ENCODE measurements at regions of chr1 and their contacts with region 1.

Region 1: GRCh38 chr1:89454845-89455521 is 69.6 kb upstream of the LRRC8B start:
- DNase-seq: no peak
- H3K4me3 ChIP-seq: no peak overlapping the region
- H3K27me3 ChIP-seq: no peaks in the 10 kb centered on the region
- CTCF ChIP-seq: peak; percentile 63

Region 2: GRCh38 chr1:88998716-88999115 is 456.3 kb before region 1 on chr1:
- CTCF ChIA-PET with region 1: interaction called, 15 read pairs
- POLR2A ChIA-PET with region 1: no interaction called
- DNase-seq: no peak
- H3K4me3 ChIP-seq: no peak overlapping the region
- H3K27me3 ChIP-seq: no peaks in the 10 kb centered on the region
- CTCF ChIP-seq: peak; percentile 33

Region 3: DNA sequence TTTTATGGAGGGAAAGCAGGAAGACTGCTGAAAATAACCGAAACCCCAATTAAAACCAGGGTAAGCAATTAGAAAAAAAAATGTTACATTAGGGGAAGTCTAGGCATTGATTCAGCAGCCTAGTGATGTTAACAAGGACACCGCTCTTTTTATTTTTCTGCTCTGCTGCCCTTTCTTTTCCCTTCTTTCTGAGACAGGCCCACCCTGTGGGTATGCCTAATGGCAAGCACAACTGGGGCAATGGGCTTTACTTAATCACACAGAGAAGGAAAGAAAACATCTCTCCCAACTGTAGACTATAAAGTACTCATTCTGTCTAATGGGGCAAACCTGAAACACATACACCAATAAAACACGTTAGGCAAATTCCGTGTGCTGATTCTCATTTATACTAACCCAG is 21.6 kb before region 1 on chr1:
- CTCF ChIA-PET with region 1: no interaction called
- POLR2A ChIA-PET with region 1: no interaction called
- DNase-seq: no peak
- H3K4me3 ChIP-seq: no peak overlapping the region
- H3K27me3 ChIP-seq: no peaks in the 10 kb centered on the region; the same call in 1 of the 2 replicates
- CTCF ChIP-seq: no peak

Region 4: DNA sequence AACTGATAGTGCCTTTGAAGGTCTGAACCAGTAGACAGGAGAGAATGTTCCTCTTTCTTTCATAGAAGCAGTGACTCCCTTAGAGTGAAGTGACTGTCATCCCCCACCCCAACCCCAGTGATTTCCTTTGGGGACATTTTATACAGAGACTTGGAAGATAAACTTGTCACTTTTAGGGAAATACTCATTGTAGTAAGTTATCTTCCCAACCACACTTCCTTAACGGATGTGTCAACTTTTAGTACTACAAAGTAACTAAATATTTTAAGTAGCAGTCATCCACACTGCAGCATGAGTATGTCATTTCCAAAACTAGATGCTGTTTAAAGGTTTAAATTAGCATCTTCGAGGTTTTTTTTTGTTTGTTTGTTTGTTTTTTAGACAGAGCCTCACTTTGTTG is 83.4 kb after region 1 on chr1:
- CTCF ChIA-PET with region 1: no interaction called
- POLR2A ChIA-PET with region 1: no interaction called
- DNase-seq: no peak
- H3K4me3 ChIP-seq: no peak overlapping the region
- H3K27me3 ChIP-seq: no peaks in the 10 kb centered on the region
- CTCF ChIP-seq: no peak

Measured in BJ (cell line).